Activated CD4-positive, alpha-beta T cell treated with anti-CD3 and anti-CD28 coated beads for 36 hours (primary cell): ENCODE measurements at regions of chr1 and their contacts with region 1.

Region 1: DNA sequence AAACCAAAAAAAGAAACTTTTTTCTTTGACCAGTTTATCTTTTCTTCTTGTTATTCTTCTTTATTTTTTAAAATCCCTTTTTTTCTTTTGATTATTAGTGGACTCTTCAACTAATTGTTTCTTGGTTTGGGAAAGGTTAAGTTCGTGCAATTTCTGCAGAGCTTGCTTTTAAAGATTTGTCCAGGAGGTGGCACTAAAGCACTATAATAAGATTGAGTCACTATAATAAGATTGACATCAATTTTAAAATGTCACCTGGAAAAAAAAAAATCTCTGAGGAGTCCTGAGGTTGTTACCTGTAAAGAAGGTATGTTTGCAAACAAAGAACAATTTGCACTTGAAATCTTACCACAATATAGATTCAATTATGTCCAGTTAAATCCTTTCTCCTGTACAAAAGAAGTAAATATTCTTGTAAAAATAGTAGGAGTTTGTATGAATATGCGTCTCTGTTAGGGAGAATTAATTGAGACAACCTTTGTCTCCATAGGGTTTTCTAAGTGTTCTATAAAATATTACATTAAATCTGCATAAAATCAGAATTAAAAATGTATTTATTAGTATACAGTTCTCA is 166.7 kb downstream of the ADGRL4 start:
- DNase-seq: peak; percentile 43
- ATAC-seq: no peak
- H3K4me3 Mint-ChIP-seq: no peak overlapping the region
- H3K27ac Mint-ChIP-seq: no peak overlapping the region
- H3K4me1 Mint-ChIP-seq: peaks cover 10% of the 10 kb centered on the region
- H3K27me3 Mint-ChIP-seq: no peaks in the 10 kb centered on the region

Region 2: GRCh38 chr1:78825561-78825960 is 14.2 kb before region 1 on chr1:
- CTCF ChIA-PET with region 1: interaction called, 11 read pairs
- POLR2A ChIA-PET with region 1: no interaction called
- intact Hi-C with region 1: no loop called
- DNase-seq: no peak
- ATAC-seq: no peak
- H3K4me3 Mint-ChIP-seq: no peak overlapping the region
- H3K27ac Mint-ChIP-seq: no peak overlapping the region
- H3K4me1 Mint-ChIP-seq: no peaks in the 10 kb centered on the region
- H3K27me3 Mint-ChIP-seq: no peaks in the 10 kb centered on the region

Region 3: DNA sequence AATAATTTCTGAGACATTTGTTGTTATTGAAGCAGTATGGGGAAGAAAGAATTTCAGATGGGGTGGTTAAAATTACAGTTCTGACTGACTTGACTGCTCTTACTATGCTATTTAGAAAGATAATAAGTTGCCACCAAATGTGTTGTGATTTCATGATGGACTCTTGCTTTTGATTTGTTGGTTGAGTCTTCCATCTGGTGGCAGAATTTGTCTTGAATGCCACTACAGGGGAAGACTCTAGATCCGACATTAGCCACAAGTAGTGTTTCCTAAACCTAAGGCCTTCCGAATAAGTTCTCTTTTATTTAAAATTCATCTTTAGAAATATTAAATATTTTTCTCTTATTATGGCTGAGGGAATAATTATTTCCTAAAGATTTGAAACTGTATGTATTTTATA is 357.6 kb after region 1 on chr1:
- CTCF ChIA-PET with region 1: no interaction called
- POLR2A ChIA-PET with region 1: no interaction called
- intact Hi-C with region 1: loop called in 1 of 2 experiments (anchors 2 kb)
- DNase-seq: no peak
- ATAC-seq: no peak
- H3K4me3 Mint-ChIP-seq: no peak overlapping the region
- H3K27ac Mint-ChIP-seq: no peak overlapping the region
- H3K4me1 Mint-ChIP-seq: peaks cover 5% of the 10 kb centered on the region
- H3K27me3 Mint-ChIP-seq: no peaks in the 10 kb centered on the region

Region 4: DNA sequence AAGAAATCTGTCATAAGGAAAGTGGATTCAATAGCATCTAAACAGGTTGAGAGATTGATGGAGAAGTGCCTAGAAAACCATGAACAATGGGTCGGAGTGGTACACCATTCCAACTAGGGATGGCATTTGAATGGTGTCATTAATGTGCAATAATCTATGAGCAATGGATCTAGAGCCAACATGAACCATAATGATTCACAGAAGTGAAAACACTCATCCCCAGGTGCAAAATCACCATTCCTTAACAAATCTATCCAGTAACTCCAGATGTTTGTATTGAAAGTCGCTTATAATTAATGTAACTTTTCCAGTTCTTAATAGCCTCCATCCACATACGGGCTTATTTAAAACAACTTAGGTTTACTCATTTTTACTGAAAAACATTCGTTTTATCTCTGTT is 368.0 kb after region 1 on chr1:
- CTCF ChIA-PET with region 1: no interaction called
- POLR2A ChIA-PET with region 1: no interaction called
- intact Hi-C with region 1: no loop called
- DNase-seq: no peak
- ATAC-seq: no peak
- H3K4me3 Mint-ChIP-seq: no peak overlapping the region
- H3K27ac Mint-ChIP-seq: no peak overlapping the region
- H3K4me1 Mint-ChIP-seq: no peaks in the 10 kb centered on the region
- H3K27me3 Mint-ChIP-seq: no peaks in the 10 kb centered on the region

Region 5: GRCh38 chr1:79353224-79353623 is 513.4 kb after region 1 on chr1:
- CTCF ChIA-PET with region 1: interaction called, 11 read pairs
- POLR2A ChIA-PET with region 1: no interaction called
- intact Hi-C with region 1: loop called (anchors 1 to 2 kb)
- DNase-seq: peak; percentile 6
- ATAC-seq: no peak
- H3K4me3 Mint-ChIP-seq: no peak overlapping the region
- H3K27ac Mint-ChIP-seq: no peak overlapping the region
- H3K4me1 Mint-ChIP-seq: no peaks in the 10 kb centered on the region
- H3K27me3 Mint-ChIP-seq: no peaks in the 10 kb centered on the region